ENCODE measurements at regions of chr1 and their contacts with region 1.

Region 1: GRCh38 chr1:222589462-222590302 is at the start of gene TAF1A:
- DNase-seq: peak; percentile 71
- ATAC-seq: peak; percentile 100
- H3K4me3 ChIP-seq: peak within 1 kb of the TSS; percentile 94 to 98
- H3K27ac ChIP-seq: peak within 1 kb of the TSS; percentile 97
- H3K4me1 ChIP-seq: peaks cover 22% of the 10 kb centered on the region
- H3K27me3 ChIP-seq: no peaks in the 10 kb centered on the region
- CTCF ChIP-seq: no peak
- total RNA-seq, gene TAF1A: 11.6 TPM

Region 2: DNA sequence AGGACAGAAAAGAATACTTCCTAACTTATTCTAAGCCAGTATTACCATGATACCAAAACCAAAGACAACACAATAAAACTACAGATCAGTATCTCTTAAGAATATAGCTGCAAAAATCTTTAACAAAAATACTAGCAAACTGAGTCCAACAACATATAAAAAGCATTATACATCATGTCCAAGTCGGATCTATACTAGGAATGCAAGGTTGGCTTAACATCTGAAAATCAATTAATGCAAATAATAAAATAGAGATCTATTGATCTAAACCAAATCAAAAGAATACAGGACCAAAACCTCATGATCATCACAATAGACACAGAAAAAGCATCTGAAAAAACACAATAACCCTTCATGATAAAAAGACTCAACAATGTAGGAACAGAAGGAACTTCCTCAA is 18.8 kb before region 1 on chr1:
- CTCF ChIA-PET with region 1: no interaction called
- POLR2A ChIA-PET with region 1: no interaction called
- in situ Hi-C with region 1: no loop called
- intact Hi-C with region 1: no loop called
- DNase-seq: no peak
- ATAC-seq: no peak
- H3K4me3 ChIP-seq: no peak overlapping the region
- H3K27ac ChIP-seq: no peak overlapping the region
- H3K4me1 ChIP-seq: no peaks in the 10 kb centered on the region
- H3K27me3 ChIP-seq: no peaks in the 10 kb centered on the region
- CTCF ChIP-seq: no peak

Region 3: GRCh38 chr1:222620566-222620965 is 30.9 kb after region 1 on chr1:
- CTCF ChIA-PET with region 1: no interaction called
- POLR2A ChIA-PET with region 1: interaction called, 5 read pairs
- in situ Hi-C with region 1: loop called (anchors 5 kb)
- intact Hi-C with region 1: no loop called
- DNase-seq: no peak
- ATAC-seq: no peak
- H3K4me3 ChIP-seq: no peak overlapping the region
- H3K27ac ChIP-seq: no peak overlapping the region
- H3K4me1 ChIP-seq: peaks cover 16% of the 10 kb centered on the region
- H3K27me3 ChIP-seq: no peaks in the 10 kb centered on the region
- CTCF ChIP-seq: no peak

Region 4: DNA sequence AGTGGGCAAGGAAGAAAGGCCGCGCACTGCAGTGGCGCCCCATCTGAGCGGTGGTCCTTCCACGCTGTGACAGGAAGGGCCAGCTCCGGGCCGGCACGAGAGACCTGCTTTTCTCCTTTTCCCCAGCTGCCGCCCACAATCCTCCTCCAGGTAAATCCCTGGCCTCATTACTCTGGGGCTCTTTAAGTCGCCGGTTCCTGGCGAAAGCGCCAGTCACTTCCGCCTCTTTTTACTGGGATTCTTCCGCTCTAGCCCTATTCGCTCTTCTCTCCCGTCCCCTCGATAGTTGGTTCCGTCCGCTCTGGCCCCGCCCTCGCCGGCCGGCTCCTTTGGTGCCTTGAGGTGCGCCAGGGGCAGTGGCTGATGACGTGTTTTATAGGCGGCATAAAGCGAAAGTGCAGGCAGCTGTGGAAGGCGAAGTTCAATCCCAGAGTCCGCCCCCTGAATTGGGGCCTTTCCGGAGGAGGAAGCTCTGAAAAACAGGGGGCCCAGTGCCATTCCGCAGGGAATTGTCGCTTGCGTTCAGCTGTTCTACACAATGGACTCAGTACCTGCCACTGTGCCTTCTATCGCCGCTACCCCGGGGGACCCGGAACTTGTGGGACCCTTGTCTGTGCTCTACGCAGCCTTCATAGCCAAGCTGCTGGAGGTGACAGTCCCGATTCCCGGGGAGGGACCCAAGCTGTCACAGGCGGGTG is 54.4 kb after region 1 on chr1:
- CTCF ChIA-PET with region 1: no interaction called
- POLR2A ChIA-PET with region 1: interaction called, 9 read pairs
- in situ Hi-C with region 1: no loop called
- intact Hi-C with region 1: loop called (anchors 2 kb)
- DNase-seq: peak; percentile 95
- ATAC-seq: peak; percentile 99
- H3K4me3 ChIP-seq: peak overlapping the region; percentile 94 to 98
- H3K27ac ChIP-seq: peak overlapping the region; percentile 99
- H3K4me1 ChIP-seq: peaks cover 20% of the 10 kb centered on the region; the same call in 1 of the 2 replicates
- H3K27me3 ChIP-seq: no peaks in the 10 kb centered on the region
- CTCF ChIP-seq: no peak

Measured in Panc1 (cell line).